ENCODE measurements at regions of chr15 and their contacts with region 1.

Region 1: DNA sequence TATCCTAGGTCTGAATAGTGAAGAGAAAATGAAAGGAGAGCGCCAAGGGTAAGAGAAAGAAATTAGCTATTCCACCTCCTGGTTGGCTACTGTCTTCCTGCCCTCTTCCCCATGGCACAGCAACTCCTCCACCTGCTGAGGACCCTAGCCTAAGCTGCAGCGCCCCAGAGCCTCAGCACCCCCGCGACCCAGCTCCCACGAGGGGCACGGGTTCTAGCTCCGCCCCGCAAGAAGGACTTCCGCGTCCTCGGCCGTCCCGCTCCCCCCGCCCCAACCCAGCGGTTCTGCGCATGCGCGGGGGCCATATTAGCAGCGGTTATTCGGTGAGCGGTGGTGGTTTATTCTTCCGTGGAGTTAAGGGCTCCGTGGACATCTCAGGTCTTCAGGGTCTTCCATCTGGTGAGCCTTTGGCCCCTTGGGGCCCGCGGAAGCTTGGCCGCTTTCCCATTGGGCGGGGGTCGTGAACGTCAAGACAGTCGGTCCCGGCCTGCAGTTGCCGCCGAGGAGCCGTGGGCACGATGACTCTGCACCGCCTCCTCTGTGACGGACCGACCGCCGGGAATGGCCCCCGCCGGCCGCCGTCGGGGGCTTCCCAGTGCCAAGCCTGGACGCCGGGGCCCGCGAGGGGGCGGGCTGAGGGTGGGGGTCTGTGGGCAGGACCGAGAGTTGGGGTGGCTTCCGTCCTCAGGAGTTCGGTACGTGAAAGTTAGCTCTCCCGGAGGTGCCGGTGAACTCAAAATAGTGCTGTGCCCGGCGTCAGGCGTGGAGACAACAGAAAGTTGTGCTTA is at the start of gene PSMA4:
- DNase-seq: peak; percentile 95 to 97
- ATAC-seq: peak; percentile 91 to 93
- H3K4me3 ChIP-seq: peak within 1 kb of the TSS; percentile 72
- H3K27ac ChIP-seq: peak within 1 kb of the TSS; percentile 93 to 96
- H3K4me1 ChIP-seq: peaks cover 13% of the 10 kb centered on the region
- CTCF ChIP-seq: no peak
- EP300 ChIP-seq: no peak
- POLR2A ChIP-seq: peak; percentile 95
- RAD21 ChIP-seq: no peak
- polyA plus RNA-seq, gene PSMA4: 556 and 719 TPM in 2 replicates

Region 2: DNA sequence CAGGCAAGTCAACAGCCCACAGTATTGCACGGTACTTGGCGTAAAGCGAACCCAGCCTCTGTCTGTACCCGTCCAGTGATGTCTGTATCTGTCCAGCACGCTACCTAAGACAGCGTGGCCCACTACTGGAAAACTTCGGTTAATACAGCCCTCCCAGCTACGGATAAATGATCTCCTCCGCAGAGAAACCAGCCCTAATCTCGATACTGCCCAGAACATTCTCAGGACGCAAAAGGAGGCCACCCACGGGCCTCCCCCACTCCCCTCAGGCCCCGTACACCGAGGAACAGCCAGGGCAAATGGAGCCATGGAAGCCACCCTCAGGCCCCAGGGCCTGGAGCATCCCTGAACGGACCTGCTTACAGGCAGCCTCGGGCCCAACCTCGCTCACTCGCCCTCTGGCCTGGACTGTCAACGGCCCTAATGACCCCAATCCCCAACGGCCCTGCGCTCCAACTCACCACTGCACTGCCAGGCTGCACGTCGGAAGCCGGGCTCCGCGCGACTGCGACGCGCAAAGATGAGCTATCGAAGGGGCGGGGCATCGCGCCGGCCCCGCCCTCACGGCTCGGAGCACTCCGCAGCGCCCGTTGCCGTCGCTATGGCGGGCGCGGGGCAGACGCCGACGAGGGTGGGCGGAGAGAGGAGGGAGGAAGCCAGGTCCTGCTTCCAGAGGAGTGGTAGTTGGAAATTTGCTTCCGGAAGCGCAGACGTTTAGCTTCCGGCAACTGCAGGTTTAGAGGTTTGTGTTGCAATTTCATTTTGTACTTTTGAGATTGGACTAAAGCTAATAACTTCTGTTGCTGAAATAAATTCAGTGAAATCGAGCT is 241.0 kb before region 1 on chr15 and contains the start of gene SKIC8:
- CTCF ChIA-PET with region 1: no interaction called
- POLR2A ChIA-PET with region 1: interaction called, 16 read pairs
- DNase-seq: peak; percentile 95 to 97
- ATAC-seq: peak; percentile 95 to 98
- H3K4me3 ChIP-seq: peak within 1 kb of the TSS; percentile 79
- H3K27ac ChIP-seq: peak within 1 kb of the TSS; percentile 77 to 88
- H3K4me1 ChIP-seq: peaks cover 25% of the 10 kb centered on the region
- CTCF ChIP-seq: no peak
- EP300 ChIP-seq: no peak
- POLR2A ChIP-seq: peak; percentile 97
- RAD21 ChIP-seq: no peak
- polyA plus RNA-seq, gene SKIC8: 162 and 177 TPM in 2 replicates

Region 3: GRCh38 chr15:78437762-78438302 is 102.5 kb before region 1 on chr15 and contains the start of gene IREB2:
- CTCF ChIA-PET with region 1: interaction called, 3 read pairs
- POLR2A ChIA-PET with region 1: interaction called, 13 read pairs
- DNase-seq: peak; percentile 99
- ATAC-seq: peak; percentile 93 to 96
- H3K4me3 ChIP-seq: peak within 1 kb of the TSS; percentile 97
- H3K27ac ChIP-seq: peak within 1 kb of the TSS; percentile 93 to 98
- H3K4me1 ChIP-seq: peaks cover 27% of the 10 kb centered on the region
- CTCF ChIP-seq: no peak
- EP300 ChIP-seq: no peak
- POLR2A ChIP-seq: peak; percentile 64
- RAD21 ChIP-seq: no peak
- polyA plus RNA-seq, gene IREB2: 71.0 and 78.1 TPM in 2 replicates

Region 4: DNA sequence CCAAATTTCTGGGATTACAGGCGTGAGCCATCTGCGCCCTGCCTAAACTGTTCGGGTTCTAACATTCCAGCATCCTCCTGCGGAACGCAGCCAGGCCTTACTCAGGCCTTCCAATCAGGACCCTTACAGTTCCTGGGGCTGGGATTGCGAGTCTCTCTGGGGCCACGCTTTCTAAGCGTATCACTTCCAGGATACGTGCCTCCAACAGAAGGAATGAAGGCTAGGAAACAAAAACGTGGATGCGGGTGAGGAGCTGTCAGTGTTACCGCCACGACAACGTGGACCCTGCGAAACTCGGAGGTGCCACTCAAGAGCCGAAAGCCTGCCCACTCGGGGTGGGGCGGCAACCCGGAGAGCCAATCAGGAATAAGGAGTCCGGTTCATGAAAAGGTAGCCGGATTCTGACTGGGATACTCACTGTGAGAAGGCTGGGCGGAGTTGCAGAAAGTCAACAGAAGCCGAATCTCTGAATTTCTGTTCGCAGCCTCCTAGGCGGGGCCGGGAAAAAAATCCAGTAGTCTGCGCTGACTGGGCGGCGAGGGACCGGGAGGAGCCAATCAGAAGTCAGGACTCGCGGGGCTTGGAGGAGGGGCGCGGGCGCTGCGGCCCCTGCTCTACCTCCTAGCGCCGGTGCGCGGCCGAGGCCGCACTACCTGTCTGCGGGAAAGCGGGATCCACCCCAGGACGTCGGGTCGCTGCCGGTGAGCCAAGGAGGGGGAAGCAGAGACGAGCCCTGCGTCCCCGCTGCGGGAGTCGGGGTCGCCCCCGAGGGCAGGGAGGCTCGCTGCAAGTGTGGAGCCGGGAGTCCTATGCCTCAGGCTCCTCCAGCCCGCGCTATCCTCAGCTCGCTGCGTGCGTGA is 33.1 kb before region 1 on chr15 and contains the start of gene HYKK:
- CTCF ChIA-PET with region 1: interaction called, 3 read pairs
- POLR2A ChIA-PET with region 1: interaction called, 20 read pairs
- DNase-seq: peak; percentile 98 to 99
- ATAC-seq: peak; percentile 96 to 97
- H3K4me3 ChIP-seq: peak within 1 kb of the TSS; percentile 71
- H3K27ac ChIP-seq: peak within 1 kb of the TSS; percentile 70 to 84
- H3K4me1 ChIP-seq: peaks cover 10% of the 10 kb centered on the region; the same call in 2 of the 3 replicates
- CTCF ChIP-seq: no peak
- EP300 ChIP-seq: no peak
- POLR2A ChIP-seq: peak; percentile 87
- RAD21 ChIP-seq: no peak; a peak in 1 of 5 replicates
- polyA plus RNA-seq, gene HYKK: 12.9 and 16.7 TPM in 2 replicates

Region 5: GRCh38 chr15:78552597-78552996 is 12.3 kb after region 1 on chr15:
- CTCF ChIA-PET with region 1: interaction called, 11 read pairs
- POLR2A ChIA-PET with region 1: interaction called, 20 read pairs
- DNase-seq: no peak
- ATAC-seq: peak; percentile 44 to 48; a peak in 4 of 6 replicates
- H3K4me3 ChIP-seq: no peak overlapping the region
- H3K27ac ChIP-seq: no peak overlapping the region
- H3K4me1 ChIP-seq: no peaks in the 10 kb centered on the region
- CTCF ChIP-seq: no peak
- EP300 ChIP-seq: no peak
- POLR2A ChIP-seq: no peak
- RAD21 ChIP-seq: no peak

Region 6: DNA sequence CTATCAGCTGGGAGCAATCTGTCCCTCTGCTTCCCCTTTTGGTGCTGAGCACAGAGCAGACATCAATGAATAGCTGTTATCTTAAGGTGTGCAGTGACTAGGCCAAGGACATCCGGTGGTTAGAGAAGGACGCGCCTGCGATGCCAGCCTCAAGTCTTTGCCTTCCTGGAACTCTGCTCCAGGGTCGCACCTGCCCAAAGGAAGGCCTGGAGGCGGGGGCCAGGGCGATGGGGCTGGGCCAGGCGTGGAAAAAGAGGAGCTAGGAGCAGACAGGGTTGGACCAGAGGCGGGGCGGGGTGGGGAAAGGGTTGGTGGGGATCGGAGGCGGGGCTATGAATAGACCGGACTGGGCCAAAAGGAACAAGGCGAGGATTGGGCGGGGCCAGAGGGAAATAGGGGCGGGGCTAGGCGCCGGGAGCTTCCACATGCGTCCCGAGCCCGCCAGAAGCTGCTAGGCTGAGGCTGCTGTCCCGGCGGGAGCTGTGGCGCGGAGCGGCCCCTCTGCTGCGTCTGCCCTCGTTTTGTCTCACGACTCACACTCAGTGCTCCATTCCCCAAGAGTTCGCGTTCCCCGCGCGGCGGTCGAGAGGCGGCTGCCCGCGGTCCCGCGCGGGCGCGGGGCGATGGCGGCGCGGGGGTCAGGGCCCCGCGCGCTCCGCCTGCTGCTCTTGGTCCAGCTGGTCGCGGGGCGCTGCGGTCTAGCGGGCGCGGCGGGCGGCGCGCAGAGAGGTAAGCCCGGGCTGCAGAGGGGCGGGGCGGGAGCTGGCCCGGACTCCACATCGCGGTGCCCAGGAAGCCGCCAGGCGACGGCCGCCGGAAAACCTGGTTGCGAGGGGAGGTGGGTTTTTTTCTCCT is 25.0 kb after region 1 on chr15 and contains the start of gene CHRNA5:
- CTCF ChIA-PET with region 1: interaction called, 10 read pairs
- POLR2A ChIA-PET with region 1: interaction called, 69 read pairs
- DNase-seq: peak; percentile 92 to 94
- ATAC-seq: peak; percentile 91 to 96
- H3K4me3 ChIP-seq: peak within 1 kb of the TSS; percentile 73
- H3K27ac ChIP-seq: peak within 1 kb of the TSS; percentile 85 to 94
- H3K4me1 ChIP-seq: peaks cover 10% of the 10 kb centered on the region
- CTCF ChIP-seq: peak; percentile 18; the same call in 2 of the 3 replicates
- EP300 ChIP-seq: no peak
- POLR2A ChIP-seq: peak; percentile 99
- RAD21 ChIP-seq: no peak; a peak in 1 of 5 replicates
- polyA plus RNA-seq, gene CHRNA5: 40.9 and 49.6 TPM in 2 replicates